Left cardiac atrium (tissue), 4 donors: ENCODE measurements at regions of chr5 and their contacts with region 1.

Region 1: GRCh38 chr5:78008356-78008967 is 232.3 kb upstream of the TBCA start:
- DNase-seq: no peak
- ATAC-seq: peak in 1 of 2 donors; percentile 53

Region 2: GRCh38 chr5:77560677-77561263 is 447.7 kb before region 1 on chr5:
- intact Hi-C with region 1: loop called in 1 of 2 experiments (anchors 5 kb)
- DNase-seq: no peak
- ATAC-seq: no peak

Region 3: DNA sequence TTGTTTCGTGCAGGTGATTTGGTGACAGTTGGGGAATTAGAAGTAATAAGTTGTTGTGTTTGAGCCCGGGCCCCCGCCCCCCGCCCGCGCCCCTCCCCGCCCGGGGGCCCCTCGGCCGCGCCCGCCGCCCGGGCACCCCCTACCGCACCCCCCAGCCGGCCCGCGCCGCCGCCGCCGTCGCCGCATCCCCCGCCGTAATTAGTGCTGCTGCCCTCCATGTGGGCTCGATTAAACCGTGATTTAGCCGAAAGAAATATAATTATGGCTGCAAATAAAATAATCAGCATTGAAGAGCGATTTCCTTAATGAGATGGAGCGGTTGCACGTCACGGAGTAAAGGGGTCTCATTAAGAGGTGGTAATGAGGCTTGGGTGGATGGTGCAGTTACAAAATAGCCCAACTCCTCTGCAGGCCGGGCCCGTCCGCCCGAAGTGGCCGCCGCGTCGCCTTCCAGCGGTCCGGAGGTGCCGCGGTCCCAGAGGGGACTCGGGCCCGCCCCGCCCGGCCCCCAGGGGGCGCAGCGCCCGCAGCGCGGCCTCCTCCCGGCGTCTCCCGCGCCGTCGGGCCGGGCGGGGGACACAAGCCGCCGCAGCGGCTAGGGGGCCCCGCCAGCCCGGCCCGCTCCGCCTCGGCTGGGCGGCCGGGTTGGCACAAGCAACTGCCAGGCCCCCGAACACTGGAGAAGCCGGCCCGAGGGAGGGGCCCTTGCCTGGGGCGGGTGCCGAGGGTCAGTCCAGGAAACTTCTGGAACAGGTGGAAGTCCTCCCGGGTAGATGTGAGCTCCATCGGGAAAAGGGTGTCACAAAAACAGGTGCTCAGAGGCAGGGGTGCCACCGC is 363.1 kb before region 1 on chr5:
- intact Hi-C with region 1: loop called in 1 of 2 experiments (anchors 10 kb)
- DNase-seq: no peak
- ATAC-seq: peak; percentile 80 to 84

Region 4: GRCh38 chr5:78116167-78116566 is 107.7 kb after region 1 on chr5:
- intact Hi-C with region 1: no loop called
- DNase-seq: no peak
- ATAC-seq: no peak